ENCODE measurements at regions of chr20 and their contacts with region 1.

Region 1: GRCh38 chr20:32052090-32052777 is at the start of gene HCK:
- DNase-seq: no peak
- H3K4me3 ChIP-seq: no peak within 1 kb of the TSS
- H3K27ac ChIP-seq: no peak within 1 kb of the TSS
- H3K4me1 ChIP-seq: no peaks in the 10 kb centered on the region
- H3K27me3 ChIP-seq: peaks cover 80% of the 10 kb centered on the region
- CTCF ChIP-seq: no peak
- total RNA-seq, gene HCK: not detected in 2 replicates

Region 2: DNA sequence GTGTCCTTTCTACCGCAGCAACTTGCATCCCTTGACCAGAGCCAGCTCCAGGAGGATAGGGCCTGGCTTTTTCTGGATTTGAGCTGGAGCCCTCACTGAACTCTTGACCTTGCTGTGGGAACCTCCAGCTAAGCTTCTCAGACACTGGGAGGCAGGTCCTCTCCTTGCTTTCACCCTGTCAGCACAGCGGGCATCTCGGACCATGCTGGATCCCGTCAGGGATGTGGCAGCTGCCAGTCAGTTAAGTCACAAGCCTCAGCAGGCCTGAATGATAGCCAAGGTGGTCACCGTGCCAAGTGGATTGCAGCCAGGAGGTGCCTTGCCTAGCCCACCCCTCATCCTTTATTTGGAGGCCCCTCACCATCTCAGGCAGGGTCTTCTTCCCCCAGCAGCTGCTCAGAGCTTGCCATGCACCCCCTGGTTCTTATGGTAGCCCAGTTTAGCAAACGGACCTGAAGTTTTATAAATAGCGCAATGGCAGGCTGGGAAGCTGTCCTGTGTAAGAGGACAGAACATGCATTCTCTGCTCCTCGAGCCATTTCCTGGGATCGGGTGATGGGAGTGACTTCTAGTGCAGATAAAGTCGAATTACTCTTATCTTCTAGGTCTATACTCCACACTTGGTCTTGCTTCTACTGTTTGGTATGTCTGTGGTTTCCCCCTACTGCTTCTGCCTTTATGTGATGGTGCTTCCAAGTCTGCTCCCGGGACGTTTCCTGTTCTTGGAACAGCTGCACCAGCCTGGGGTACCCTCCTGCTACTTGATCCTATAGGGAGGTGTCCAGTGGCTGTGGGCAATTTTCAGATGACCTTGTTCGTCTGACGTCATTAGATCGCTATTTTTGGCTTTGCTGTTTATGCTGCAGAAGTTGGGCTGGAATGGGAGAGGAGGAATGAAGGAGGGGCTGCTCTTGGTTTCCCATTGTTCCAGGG is 240.2 kb before region 1 on chr20:
- CTCF ChIA-PET with region 1: interaction called, 12 read pairs
- POLR2A ChIA-PET with region 1: no interaction called
- intact Hi-C with region 1: no loop called
- DNase-seq: no peak
- H3K4me3 ChIP-seq: no peak overlapping the region
- H3K27ac ChIP-seq: no peak overlapping the region
- H3K4me1 ChIP-seq: peaks cover 8% of the 10 kb centered on the region; the same call in 1 of the 2 replicates
- H3K27me3 ChIP-seq: no peaks in the 10 kb centered on the region
- CTCF ChIP-seq: no peak

Region 3: GRCh38 chr20:32612351-32613191 is 560.3 kb after region 1 on chr20:
- CTCF ChIA-PET with region 1: interaction called, 13 read pairs
- POLR2A ChIA-PET with region 1: no interaction called
- intact Hi-C with region 1: no loop called
- DNase-seq: no peak
- H3K4me3 ChIP-seq: no peak overlapping the region
- H3K27ac ChIP-seq: no peak overlapping the region
- H3K4me1 ChIP-seq: no peaks in the 10 kb centered on the region
- H3K27me3 ChIP-seq: no peaks in the 10 kb centered on the region
- CTCF ChIP-seq: no peak

Measured in PC-9 (cell line).